ENCODE measurements at regions of chr10 and their contacts with region 1.

Region 1: GRCh38 chr10:124708922-124709520 is 35.2 kb downstream of the FAM53B start:
- DNase-seq: no peak
- H3K4me3 Mint-ChIP-seq: peak overlapping the region; percentile 30
- H3K27ac Mint-ChIP-seq: peak overlapping the region; percentile 81
- H3K4me1 Mint-ChIP-seq: peaks cover 31% of the 10 kb centered on the region
- H3K27me3 Mint-ChIP-seq: no peaks in the 10 kb centered on the region
- CTCF ChIP-seq: no peak

Region 2: GRCh38 chr10:124340033-124340760 is 368.8 kb before region 1 on chr10:
- CTCF ChIA-PET with region 1: no interaction called
- POLR2A ChIA-PET with region 1: no interaction called
- intact Hi-C with region 1: no loop called
- DNase-seq: peak; percentile 77
- H3K4me3 Mint-ChIP-seq: no peak overlapping the region
- H3K27ac Mint-ChIP-seq: no peak overlapping the region
- H3K4me1 Mint-ChIP-seq: peaks cover 9% of the 10 kb centered on the region
- H3K27me3 Mint-ChIP-seq: no peaks in the 10 kb centered on the region
- CTCF ChIP-seq: no peak

Region 3: GRCh38 chr10:124719213-124719851 is 10.3 kb after region 1 on chr10:
- CTCF ChIA-PET with region 1: interaction called, 10 read pairs
- POLR2A ChIA-PET with region 1: interaction called, 15 read pairs
- intact Hi-C with region 1: no loop called
- DNase-seq: peak; percentile 90
- H3K4me3 Mint-ChIP-seq: peak overlapping the region; percentile 36
- H3K27ac Mint-ChIP-seq: peak overlapping the region; percentile 78
- H3K4me1 Mint-ChIP-seq: peaks cover 39% of the 10 kb centered on the region
- H3K27me3 Mint-ChIP-seq: no peaks in the 10 kb centered on the region
- CTCF ChIP-seq: no peak

Region 4: DNA sequence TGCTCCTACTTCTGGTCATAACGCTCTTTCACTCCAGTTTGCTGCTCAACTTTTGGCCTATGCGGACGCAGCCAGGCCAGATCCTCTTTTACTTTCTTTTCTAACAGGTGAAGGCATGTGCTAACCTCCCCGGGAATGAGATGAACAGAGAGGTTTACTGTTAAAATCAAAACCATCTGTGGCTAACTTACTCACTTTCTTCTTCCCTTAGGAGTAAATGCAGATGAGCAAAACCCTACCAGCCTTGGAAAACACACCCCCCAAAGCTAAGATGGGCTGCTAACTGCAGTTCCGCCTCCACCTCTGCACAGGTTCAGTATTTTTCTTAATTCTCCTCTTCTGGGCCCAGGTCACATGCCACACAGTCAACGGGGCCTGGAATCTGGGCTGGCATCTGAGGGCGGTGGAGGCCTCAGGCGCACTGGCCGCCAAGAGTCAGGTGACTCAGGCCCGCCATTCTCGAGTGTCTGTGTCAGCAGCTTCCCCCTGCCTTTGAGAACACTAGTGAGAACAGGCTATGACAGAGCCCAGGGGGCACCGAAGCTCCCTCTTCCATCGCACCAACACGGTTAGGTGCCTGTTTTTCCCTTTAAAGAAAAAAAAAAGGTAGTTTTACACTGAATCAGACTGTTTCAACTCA is 24.0 kb after region 1 on chr10:
- CTCF ChIA-PET with region 1: interaction called, 3 read pairs
- POLR2A ChIA-PET with region 1: interaction called, 14 read pairs
- intact Hi-C with region 1: no loop called
- DNase-seq: no peak
- H3K4me3 Mint-ChIP-seq: peak overlapping the region; percentile 49
- H3K27ac Mint-ChIP-seq: peak overlapping the region; percentile 88
- H3K4me1 Mint-ChIP-seq: peaks cover 37% of the 10 kb centered on the region
- H3K27me3 Mint-ChIP-seq: no peaks in the 10 kb centered on the region
- CTCF ChIP-seq: no peak